Activated CD4-positive, alpha-beta memory T cell treated with anti-CD3 and anti-CD28 coated beads, Interleukin-2, amount 10 ng/mL, durations not matched to agents 7 days and 5 days (primary cell): ENCODE measurements at regions of chr12 and their contacts with region 1.

Region 1: GRCh38 chr12:120116792-120117651 is 469 bp upstream of the RAB35 start:
- DNase-seq: peak; percentile 98
- H3K4me3 Mint-ChIP-seq: peak overlapping the region; percentile 89
- H3K27ac Mint-ChIP-seq: peak overlapping the region; percentile 80
- H3K4me1 Mint-ChIP-seq: peaks cover 76% of the 10 kb centered on the region
- H3K27me3 Mint-ChIP-seq: no peaks in the 10 kb centered on the region

Region 2: DNA sequence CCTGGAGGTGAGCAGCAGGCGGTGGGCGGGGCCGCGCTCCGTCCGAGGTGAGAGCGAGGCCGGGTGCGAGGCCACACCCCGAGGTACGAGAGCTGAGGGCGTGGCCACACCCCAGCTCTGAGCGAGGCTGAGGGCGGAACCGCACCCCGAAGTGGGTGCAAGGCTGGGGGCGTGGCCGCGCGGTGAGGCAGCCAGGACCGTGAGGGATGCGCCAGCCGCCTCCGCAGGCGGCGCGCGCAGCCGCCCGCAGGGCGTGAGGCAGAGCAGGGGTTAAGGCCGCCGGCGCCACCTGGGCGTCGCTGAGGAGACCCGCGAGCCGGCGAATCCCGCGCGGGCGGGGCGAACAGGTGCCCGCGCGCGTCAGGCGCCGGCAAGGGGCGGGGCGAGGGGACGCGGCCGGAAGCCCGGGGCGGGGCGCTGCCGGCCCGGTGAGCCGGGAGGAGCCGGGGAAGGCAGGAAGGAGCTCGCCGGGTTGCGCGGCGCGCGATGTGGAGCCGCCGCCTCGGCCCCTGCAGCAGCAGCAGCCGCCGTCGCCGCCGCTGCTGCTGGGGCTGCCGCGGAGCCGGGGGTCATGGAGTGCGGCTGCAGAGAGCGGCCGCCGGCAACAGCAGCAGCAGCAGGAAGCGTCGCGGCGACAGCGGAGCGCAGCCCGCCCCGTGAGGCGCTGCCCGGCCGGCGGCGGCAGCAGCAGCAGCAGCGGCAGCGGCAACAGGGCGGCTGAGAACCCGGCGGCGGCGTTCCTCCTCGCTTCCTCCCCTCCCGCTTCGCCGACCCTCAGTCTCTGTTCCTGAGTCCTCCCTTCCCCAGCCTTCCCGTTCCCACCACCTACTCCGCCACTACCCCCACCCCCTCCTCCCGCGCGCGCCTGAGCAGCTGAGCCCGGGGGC is 128.0 kb before region 1 on chr12 and contains the start of gene BICDL1:
- CTCF ChIA-PET with region 1: interaction called, 6 read pairs
- POLR2A ChIA-PET with region 1: interaction called, 10 read pairs
- DNase-seq: peak; percentile 97
- H3K4me3 Mint-ChIP-seq: peak within 1 kb of the TSS; percentile 79
- H3K27ac Mint-ChIP-seq: peak within 1 kb of the TSS; percentile 82
- H3K4me1 Mint-ChIP-seq: peaks cover 40% of the 10 kb centered on the region
- H3K27me3 Mint-ChIP-seq: peaks cover 9% of the 10 kb centered on the region
- total RNA-seq, gene BICDL1: 44.6 to 44.7 TPM

Region 3: DNA sequence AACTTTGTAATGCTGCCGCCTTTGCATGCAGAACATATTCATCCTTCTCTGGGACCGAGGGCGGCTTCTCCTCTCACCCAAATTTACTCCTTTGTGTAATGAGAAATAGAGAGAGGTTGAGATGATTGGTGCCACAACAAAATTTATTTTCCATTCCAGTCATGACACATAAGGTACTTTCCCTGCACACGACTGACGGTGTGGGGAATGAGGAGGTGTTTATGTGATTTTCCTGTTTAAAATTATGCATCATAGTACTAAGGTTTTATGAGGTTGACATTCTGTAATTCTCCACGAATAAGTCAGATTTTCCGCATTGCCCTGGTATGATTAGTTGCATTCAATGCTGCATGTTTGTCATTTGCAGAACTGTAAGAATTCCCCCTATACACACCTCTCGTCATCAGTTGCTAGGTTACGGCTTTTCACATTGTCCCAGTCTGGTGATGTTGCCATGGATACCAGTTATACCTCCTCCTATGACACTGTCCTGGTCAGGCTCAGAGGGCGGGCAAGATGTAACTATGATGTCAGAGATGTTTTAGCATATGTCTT is 104.9 kb before region 1 on chr12:
- CTCF ChIA-PET with region 1: no interaction called
- POLR2A ChIA-PET with region 1: interaction called, 12 read pairs
- DNase-seq: peak; percentile 77
- H3K4me3 Mint-ChIP-seq: peak overlapping the region; percentile 60
- H3K27ac Mint-ChIP-seq: peak overlapping the region; percentile 88
- H3K4me1 Mint-ChIP-seq: peaks cover 77% of the 10 kb centered on the region
- H3K27me3 Mint-ChIP-seq: no peaks in the 10 kb centered on the region

Region 4: DNA sequence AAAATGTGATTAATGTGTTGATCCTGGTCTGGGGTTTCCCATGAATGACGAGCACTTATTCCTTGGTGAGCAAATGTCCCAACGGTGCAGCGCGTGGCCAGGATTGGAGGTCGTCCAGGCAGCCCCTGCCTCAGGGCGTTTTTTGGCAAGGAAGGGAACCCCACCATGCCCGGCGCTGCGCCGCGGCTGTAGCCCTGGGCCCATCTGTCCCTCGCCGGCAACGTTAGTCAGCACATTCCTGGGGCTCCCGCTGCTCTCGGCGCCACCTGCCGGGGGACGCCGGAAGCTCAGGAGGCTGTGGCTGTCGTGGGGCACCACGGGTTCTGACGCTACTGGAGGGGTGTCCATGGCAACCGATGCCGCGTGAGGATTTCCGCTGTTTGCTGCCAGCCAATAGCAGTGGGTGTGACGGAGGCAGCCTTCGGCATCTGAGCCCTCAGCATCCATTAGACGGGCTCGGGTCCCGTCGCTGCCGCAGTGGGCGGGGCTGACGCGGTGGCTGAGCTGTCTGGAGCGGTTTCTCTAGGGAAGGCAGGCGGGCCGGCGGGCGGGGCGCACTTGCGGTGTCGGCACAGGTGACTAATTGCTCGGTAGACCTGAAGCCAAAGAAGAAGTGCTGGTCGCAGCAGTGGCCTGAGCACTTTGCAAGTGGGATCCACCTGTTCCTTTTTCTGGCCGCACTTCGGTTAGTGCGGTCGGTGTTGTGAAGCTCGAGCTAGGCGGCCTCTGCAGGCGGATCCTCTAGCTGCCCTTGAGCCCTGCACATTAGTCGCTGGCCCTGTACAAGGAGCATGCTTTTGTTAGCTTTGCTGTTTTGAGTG is 30.0 kb before region 1 on chr12:
- CTCF ChIA-PET with region 1: interaction called, 34 read pairs
- POLR2A ChIA-PET with region 1: interaction called, 37 read pairs
- DNase-seq: peak; percentile 100
- H3K4me3 Mint-ChIP-seq: peak overlapping the region; percentile 67
- H3K27ac Mint-ChIP-seq: peak overlapping the region; percentile 83
- H3K4me1 Mint-ChIP-seq: peaks cover 47% of the 10 kb centered on the region
- H3K27me3 Mint-ChIP-seq: no peaks in the 10 kb centered on the region

Region 5: GRCh38 chr12:120100435-120101029 is 16.5 kb before region 1 on chr12:
- CTCF ChIA-PET with region 1: interaction called, 3 read pairs
- POLR2A ChIA-PET with region 1: interaction called, 70 read pairs
- DNase-seq: no peak
- H3K4me3 Mint-ChIP-seq: no peak overlapping the region
- H3K27ac Mint-ChIP-seq: peak overlapping the region; percentile 2
- H3K4me1 Mint-ChIP-seq: peaks cover 31% of the 10 kb centered on the region
- H3K27me3 Mint-ChIP-seq: no peaks in the 10 kb centered on the region

Region 6: GRCh38 chr12:120249875-120250795 is 133.1 kb after region 1 on chr12:
- CTCF ChIA-PET with region 1: no interaction called
- POLR2A ChIA-PET with region 1: interaction called, 13 read pairs
- DNase-seq: peak; percentile 80
- H3K4me3 Mint-ChIP-seq: peak overlapping the region; percentile 57
- H3K27ac Mint-ChIP-seq: peak overlapping the region; percentile 96
- H3K4me1 Mint-ChIP-seq: peaks cover 84% of the 10 kb centered on the region
- H3K27me3 Mint-ChIP-seq: no peaks in the 10 kb centered on the region